ENCODE measurements at regions of chr5 and their contacts with region 1.

Region 1: DNA sequence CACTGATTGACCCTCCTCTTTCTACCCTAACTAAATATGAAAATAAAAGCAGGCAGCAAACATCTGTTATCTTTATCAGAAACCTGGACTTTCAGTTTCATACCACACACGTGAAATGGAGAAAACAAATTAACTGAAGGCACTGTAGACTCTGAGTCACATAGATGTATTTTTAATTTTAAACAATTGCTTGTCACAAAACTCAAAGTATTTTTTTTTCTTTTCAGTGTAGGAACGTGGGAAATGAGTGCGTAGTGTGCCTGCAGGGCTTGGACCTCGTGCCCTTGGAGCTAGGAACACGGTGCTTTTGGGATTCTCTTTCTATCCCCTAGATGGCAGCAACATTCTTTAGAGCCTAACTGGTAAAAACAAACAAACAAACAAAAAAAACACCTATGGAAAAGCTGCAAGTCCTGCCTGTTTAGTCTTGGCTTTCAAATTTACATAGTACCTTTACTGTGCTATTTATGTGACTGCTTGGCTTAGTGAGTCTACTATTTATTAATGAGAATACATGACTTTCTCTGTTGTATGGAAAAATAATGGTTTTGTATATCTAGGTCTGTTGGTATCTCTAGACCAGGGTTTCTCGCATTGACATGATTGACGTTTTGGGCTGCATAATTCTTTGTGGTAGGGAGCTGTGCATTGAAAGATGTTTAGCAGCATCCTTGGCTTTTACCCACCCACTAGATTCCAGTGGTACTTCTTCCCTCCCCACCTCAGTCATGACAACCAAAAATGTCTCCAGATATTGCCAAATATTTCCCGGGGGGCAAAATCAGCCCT is 16.8 kb upstream of the ACTBL2 start:
- DNase-seq: no peak
- H3K4me3 ChIP-seq: peak overlapping the region in 1 of 2 donors; percentile 26
- H3K27ac ChIP-seq: peak overlapping the region in 1 of 2 donors; percentile 11
- H3K4me1 ChIP-seq: peaks cover 9 to 32% of the 10 kb centered on the region in 2 donors
- H3K27me3 ChIP-seq: no peaks in the 10 kb centered on the region
- CTCF ChIP-seq: peak in 2 of 3 experiments; percentile 38 to 63

Region 2: GRCh38 chr5:57383093-57383861 is 116.2 kb before region 1 on chr5:
- intact Hi-C with region 1: loop called (anchors 5 kb)
- DNase-seq: peak in 1 of 2 donors; percentile 71
- H3K4me3 ChIP-seq: peak overlapping the region in 1 of 2 donors; percentile 26
- H3K27ac ChIP-seq: peak overlapping the region; percentile 45 to 51
- H3K4me1 ChIP-seq: peaks cover 0 to 7% of the 10 kb centered on the region in 2 donors
- H3K27me3 ChIP-seq: no peaks in the 10 kb centered on the region
- CTCF ChIP-seq: peak in 2 of 3 experiments; percentile 14 to 70

Region 3: GRCh38 chr5:57662991-57663390 is 163.5 kb after region 1 on chr5:
- intact Hi-C with region 1: no loop called
- DNase-seq: no peak
- H3K4me3 ChIP-seq: no peak overlapping the region
- H3K27ac ChIP-seq: no peak overlapping the region
- H3K4me1 ChIP-seq: peaks cover 0 to 2% of the 10 kb centered on the region in 2 donors
- H3K27me3 ChIP-seq: no peaks in the 10 kb centered on the region
- CTCF ChIP-seq: no peak

Region 4: DNA sequence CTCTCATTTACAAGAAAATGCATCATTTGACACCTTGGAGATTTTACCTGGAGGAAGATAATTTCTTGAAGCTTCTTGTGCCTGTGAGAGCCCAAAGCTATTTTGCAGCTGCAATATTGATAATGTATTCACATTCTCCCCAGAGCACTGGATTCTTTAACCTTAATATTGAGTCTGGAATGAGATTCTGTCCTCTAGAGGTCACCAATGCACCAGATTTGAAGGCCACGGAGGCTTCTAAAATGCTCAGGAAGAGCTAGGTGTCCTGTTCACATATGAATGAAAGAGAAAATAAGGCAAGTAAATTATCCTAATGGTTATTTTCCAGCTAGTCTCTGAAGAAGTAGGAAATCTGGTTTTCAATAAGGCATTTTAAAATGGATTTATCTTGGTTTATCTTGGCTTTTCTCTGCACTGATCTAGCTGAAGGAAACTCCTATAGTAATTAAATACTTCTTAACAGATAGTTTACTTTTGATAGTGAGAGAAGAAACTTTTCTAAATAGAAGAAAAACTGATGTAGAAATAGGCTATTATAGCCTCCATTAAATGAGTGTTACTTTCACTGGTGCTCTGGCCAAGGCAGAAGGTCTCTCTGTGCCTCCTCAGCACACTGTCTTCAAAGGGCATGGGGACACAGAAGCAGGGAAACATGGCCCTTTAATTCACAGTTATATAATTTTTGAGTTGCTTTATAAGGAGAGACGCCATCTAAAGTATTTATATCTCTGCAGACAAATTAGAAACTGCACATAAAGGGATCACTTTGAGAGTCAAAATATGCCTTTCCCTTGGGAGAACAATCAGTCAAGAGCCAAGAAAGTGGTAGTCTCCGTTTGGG is 280.1 kb after region 1 on chr5:
- intact Hi-C with region 1: loop called (anchors 5 kb)
- DNase-seq: no peak
- H3K4me3 ChIP-seq: peak overlapping the region in 1 of 2 donors; percentile 35
- H3K27ac ChIP-seq: peak overlapping the region in 1 of 2 donors; percentile 11
- H3K4me1 ChIP-seq: peaks cover 6% of the 10 kb centered on the region in 2 donors
- H3K27me3 ChIP-seq: no peaks in the 10 kb centered on the region
- CTCF ChIP-seq: peak; percentile 35 to 62 (median 50)

Measured in ascending aorta (tissue), 2 donors.